ENCODE measurements at regions of chr17 and their contacts with region 1.

Region 1: GRCh38 chr17:27782791-27783206 is 17.5 kb downstream of the NOS2 start:
- DNase-seq: no peak
- H3K4me3 ChIP-seq: no peak overlapping the region
- H3K27ac ChIP-seq: no peak overlapping the region
- H3K4me1 ChIP-seq: no peaks in the 10 kb centered on the region
- H3K27me3 ChIP-seq: no peaks in the 10 kb centered on the region
- CTCF ChIP-seq: no peak
- EP300 ChIP-seq: no peak
- POLR2A ChIP-seq: no peak

Region 2: GRCh38 chr17:28018439-28019070 is 235.8 kb after region 1 on chr17:
- intact Hi-C with region 1: loop called in 1 of 4 experiments (anchors 5 kb)
- DNase-seq: no peak
- H3K4me3 ChIP-seq: no peak overlapping the region
- H3K27ac ChIP-seq: no peak overlapping the region
- H3K4me1 ChIP-seq: peaks cover 2% of the 10 kb centered on the region
- H3K27me3 ChIP-seq: no peaks in the 10 kb centered on the region
- CTCF ChIP-seq: no peak
- EP300 ChIP-seq: no peak
- POLR2A ChIP-seq: no peak

Measured in ovary (tissue), 10 donors.